Psoas muscle (tissue), 8 donors: ENCODE measurements at regions of chr5 and their contacts with region 1.

Region 1: DNA sequence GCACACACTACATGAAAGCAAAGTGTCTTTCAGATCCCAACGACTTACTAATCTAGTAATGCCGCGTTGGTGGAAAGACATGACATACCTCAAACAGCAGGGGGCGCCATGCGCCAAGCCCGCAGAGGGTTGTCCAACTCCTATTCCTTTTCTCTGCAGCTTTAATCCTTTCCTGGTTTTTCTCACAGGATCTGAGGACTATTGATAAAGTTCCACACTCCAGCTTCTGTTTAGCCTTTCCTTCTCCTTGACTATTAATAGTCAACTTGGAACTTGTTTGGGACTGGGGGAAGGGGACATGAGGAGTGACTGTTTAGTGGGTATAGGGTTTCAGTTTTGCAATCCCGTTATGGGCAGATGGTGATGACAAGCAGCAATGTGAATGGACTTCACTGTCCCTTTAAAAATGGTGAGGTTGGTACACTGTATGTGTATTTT is 62.9 kb downstream of the OTULIN start:
- DNase-seq: peak; percentile 71 to 84
- ATAC-seq: peak; percentile 80 to 87 (median 84)
- H3K4me3 ChIP-seq: peak overlapping the region; percentile 4
- H3K27ac ChIP-seq: peak overlapping the region; percentile 75
- H3K4me1 ChIP-seq: peaks cover 56% of the 10 kb centered on the region
- H3K27me3 ChIP-seq: no peaks in the 10 kb centered on the region
- CTCF ChIP-seq: peak; percentile 95

Region 2: DNA sequence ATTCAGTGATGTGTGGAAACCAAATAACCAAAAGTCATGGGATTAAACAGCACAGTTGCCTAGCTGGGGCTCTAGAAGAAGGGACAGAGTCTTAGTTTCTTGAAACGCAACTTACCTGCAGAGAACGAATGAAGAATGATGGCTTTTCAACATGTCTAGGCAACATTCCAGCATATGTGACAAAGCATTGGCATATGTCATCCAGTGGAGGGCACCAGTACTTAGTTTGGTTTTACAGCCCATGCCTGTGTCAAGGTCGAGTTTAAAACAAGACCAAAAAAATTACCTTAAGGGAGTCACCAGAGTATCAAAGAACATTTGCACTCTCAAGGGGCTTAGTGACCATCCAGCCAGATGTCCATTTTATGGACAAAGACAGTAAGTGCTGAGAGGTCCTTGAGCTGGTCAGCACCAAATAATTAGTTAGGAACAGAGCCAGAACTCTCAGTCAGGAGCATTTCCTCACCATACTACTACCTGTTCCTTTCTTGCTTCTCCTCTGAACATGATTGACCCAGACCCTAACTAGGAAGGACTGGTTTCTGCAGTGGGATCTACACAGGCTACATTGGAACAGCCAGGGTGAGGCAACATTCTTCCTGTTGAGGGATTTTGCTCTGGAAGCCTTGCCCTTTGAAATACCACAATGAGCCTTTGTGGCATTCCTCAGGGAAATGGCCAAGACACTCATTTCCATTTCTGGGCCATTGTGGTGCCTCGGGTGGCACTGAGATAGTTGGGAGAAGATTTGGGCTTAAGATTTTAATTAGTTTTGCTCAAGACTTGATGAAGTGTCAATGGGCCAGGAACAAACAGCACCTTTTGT is 219.6 kb after region 1 on chr5:
- intact Hi-C with region 1: no loop called
- DNase-seq: no peak
- ATAC-seq: peak in 1 of 4 donors; percentile 47
- H3K4me3 ChIP-seq: no peak overlapping the region
- H3K27ac ChIP-seq: no peak overlapping the region
- H3K4me1 ChIP-seq: no peaks in the 10 kb centered on the region
- H3K27me3 ChIP-seq: no peaks in the 10 kb centered on the region
- CTCF ChIP-seq: peak; percentile 23

Region 3: DNA sequence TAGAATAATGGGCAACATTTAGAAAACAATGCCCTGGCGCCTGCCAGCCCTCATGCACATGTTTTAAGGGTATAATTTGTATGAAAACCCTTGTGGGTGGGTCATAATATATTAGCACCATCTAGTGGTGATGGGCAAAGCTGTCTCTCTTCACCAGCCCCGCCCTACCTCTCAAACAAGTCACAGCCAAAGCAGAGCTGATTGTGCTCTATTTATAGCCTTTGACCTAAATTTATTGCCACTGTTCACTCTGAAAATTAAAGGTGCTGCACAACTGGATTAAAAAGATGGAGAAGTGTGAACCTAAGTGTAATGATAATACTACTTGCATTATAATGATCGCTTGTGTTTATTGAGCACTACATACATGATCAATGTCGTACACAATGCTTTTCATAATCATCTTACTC is 276.1 kb after region 1 on chr5:
- intact Hi-C with region 1: loop called (anchors 2 kb)
- DNase-seq: peak; percentile 26 to 60
- ATAC-seq: peak; percentile 87 to 97 (median 94)
- H3K4me3 ChIP-seq: no peak overlapping the region
- H3K27ac ChIP-seq: no peak overlapping the region
- H3K4me1 ChIP-seq: no peaks in the 10 kb centered on the region
- H3K27me3 ChIP-seq: no peaks in the 10 kb centered on the region
- CTCF ChIP-seq: peak; percentile 88